ENCODE measurements at regions of chr6 and their contacts with region 1.

Region 1: DNA sequence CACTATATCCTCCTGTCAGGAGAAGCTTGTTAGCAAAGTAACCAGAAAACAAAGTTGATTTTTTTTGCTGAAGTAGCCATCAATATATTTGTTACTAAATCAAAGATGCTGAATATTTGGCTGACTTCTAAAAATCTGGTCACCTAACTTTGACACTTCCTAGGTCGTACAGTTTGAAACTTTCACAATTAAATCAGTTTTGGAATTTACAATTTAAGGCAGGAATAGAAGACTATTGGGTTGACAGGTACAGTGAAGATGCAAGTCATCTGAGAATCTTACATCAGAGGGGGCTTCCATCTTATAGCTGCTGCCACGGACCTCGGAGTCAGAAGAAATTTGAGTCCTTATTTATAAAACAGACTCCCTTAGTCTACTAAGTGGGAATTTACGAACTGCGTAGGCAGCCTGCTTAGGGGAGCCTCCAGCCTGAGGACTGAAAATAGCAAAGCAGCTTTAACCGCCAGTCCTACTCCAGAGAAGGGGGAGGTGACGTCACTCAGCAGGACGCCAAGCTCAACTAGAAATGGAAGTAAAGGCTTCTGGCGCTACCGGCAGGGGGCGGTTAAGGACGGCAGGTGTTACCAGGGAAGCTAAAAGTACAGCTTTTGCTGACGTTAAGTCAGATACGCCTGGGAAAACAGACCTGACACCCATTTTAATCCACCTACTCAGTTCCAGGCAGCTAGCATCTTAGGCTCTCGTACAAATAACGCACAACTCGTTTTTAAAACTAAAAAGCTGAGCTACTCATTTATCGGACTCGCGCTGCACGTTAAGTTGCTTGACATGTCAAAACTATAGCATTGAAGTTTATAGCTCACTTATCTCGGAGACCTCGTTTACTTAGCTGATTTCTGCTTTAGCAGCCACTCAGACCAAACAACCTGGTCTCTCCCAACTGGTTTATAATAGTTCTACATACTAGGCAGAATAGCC is 61.1 kb upstream of the HFE start:
- DNase-seq: peak; percentile 96
- ATAC-seq: peak; percentile 39
- H3K4me3 Mint-ChIP-seq: peak overlapping the region; percentile 81
- H3K27ac Mint-ChIP-seq: peak overlapping the region; percentile 98
- H3K4me1 Mint-ChIP-seq: peaks cover 51% of the 10 kb centered on the region
- H3K27me3 Mint-ChIP-seq: no peaks in the 10 kb centered on the region

Region 2: DNA sequence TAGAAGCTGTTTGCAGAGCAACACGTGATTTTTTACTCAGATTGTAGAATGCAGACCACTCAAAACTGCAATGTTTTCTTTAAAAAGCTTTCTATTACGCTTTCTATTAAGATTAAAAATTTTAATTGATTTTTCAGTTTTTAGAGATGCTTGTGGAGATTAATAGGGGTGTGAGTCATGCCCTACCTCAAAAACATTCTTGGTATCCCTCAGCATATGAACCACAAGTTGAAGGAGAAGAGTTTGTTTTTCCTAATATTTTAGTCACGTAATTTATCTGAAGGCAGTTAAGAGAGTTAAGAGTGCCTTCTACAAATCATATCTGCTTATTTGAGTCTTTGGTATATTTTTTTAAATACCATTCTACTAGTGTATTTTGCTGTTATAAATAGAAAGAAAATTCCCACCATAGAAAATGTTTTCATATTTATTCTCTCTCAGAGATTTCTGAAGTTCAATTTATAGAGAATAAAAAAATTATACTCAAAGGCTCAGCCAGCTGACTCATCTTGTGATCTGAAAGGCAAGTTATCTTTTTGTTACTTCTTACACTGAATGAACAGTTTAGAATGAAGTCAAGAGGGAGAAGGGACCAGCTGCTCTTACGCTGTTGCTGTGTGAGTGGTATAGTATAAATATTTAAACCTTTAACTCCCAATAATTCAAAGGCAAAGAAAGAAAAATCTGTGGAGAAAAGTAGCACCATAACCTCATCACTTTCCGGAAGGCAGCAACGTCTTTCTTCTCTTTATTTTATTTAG is 1098.0 kb before region 1 on chr6:
- CTCF ChIA-PET with region 1: no interaction called
- POLR2A ChIA-PET with region 1: interaction called, 4 read pairs
- intact Hi-C with region 1: loop called in 1 of 2 experiments (anchors 5 kb)
- DNase-seq: no peak
- ATAC-seq: peak; percentile 15
- H3K4me3 Mint-ChIP-seq: peak overlapping the region; percentile 84
- H3K27ac Mint-ChIP-seq: peak overlapping the region; percentile 95
- H3K4me1 Mint-ChIP-seq: peaks cover 90% of the 10 kb centered on the region
- H3K27me3 Mint-ChIP-seq: no peaks in the 10 kb centered on the region

Region 3: GRCh38 chr6:25617997-25618396 is 408.2 kb before region 1 on chr6:
- CTCF ChIA-PET with region 1: no interaction called
- POLR2A ChIA-PET with region 1: no interaction called
- intact Hi-C with region 1: no loop called
- DNase-seq: no peak
- ATAC-seq: no peak
- H3K4me3 Mint-ChIP-seq: no peak overlapping the region
- H3K27ac Mint-ChIP-seq: no peak overlapping the region
- H3K4me1 Mint-ChIP-seq: no peaks in the 10 kb centered on the region
- H3K27me3 Mint-ChIP-seq: no peaks in the 10 kb centered on the region

Region 4: GRCh38 chr6:25851961-25852360 is 174.2 kb before region 1 on chr6:
- CTCF ChIA-PET with region 1: no interaction called
- POLR2A ChIA-PET with region 1: no interaction called
- intact Hi-C with region 1: no loop called
- DNase-seq: no peak
- ATAC-seq: no peak
- H3K4me3 Mint-ChIP-seq: no peak overlapping the region
- H3K27ac Mint-ChIP-seq: no peak overlapping the region
- H3K4me1 Mint-ChIP-seq: peaks cover 7% of the 10 kb centered on the region
- H3K27me3 Mint-ChIP-seq: peaks cover 14% of the 10 kb centered on the region

Region 5: GRCh38 chr6:25934735-25935306 is 91.3 kb before region 1 on chr6:
- CTCF ChIA-PET with region 1: no interaction called
- POLR2A ChIA-PET with region 1: no interaction called
- intact Hi-C with region 1: no loop called
- DNase-seq: no peak
- ATAC-seq: peak; percentile 61
- H3K4me3 Mint-ChIP-seq: no peak overlapping the region
- H3K27ac Mint-ChIP-seq: no peak overlapping the region
- H3K4me1 Mint-ChIP-seq: peaks cover 8% of the 10 kb centered on the region
- H3K27me3 Mint-ChIP-seq: peaks cover 10% of the 10 kb centered on the region

Region 6: DNA sequence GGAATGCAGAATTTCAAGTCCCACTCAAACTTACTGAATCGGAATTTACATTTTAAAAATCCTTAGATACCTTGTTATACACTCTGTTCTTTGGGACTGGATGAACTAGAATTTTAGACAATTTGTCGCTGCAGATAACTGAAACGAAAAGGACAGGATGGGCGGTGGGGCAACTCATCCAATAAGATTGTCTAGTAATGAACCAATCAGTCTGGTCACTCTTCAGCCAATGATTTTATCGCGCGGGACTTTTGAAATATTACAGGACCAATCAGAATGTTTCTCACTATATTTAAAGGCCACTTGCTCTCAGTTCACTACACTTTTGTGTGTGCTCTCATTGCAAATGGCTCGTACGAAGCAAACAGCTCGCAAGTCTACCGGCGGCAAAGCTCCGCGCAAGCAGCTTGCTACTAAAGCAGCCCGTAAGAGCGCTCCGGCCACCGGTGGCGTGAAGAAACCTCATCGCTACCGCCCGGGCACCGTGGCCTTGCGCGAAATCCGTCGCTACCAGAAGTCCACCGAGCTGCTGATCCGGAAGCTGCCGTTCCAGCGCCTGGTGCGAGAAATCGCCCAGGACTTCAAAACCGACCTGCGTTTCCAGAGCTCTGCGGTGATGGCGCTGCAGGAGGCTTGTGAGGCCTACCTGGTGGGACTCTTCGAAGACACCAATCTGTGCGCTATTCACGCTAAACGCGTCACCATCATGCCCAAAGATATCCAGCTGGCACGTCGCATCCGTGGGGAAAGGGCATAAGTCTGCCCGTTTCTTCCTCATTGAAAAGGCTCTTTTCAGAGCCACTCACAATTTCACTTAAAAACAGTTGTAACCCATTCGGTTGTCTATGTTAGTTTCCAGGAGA is 19.1 kb after region 1 on chr6:
- CTCF ChIA-PET with region 1: interaction called, 49 read pairs
- POLR2A ChIA-PET with region 1: interaction called, 571 read pairs
- intact Hi-C with region 1: loop called (anchors 1 kb)
- DNase-seq: peak; percentile 83
- ATAC-seq: peak; percentile 63
- H3K4me3 Mint-ChIP-seq: peak overlapping the region; percentile 79
- H3K27ac Mint-ChIP-seq: peak overlapping the region; percentile 99
- H3K4me1 Mint-ChIP-seq: peaks cover 18% of the 10 kb centered on the region
- H3K27me3 Mint-ChIP-seq: no peaks in the 10 kb centered on the region

Region 7: GRCh38 chr6:26065952-26066380 is 39.8 kb after region 1 on chr6:
- CTCF ChIA-PET with region 1: interaction called, 10 read pairs
- POLR2A ChIA-PET with region 1: no interaction called
- intact Hi-C with region 1: no loop called
- DNase-seq: peak; percentile 72
- ATAC-seq: peak; percentile 95
- H3K4me3 Mint-ChIP-seq: no peak overlapping the region
- H3K27ac Mint-ChIP-seq: no peak overlapping the region
- H3K4me1 Mint-ChIP-seq: peaks cover 2% of the 10 kb centered on the region
- H3K27me3 Mint-ChIP-seq: no peaks in the 10 kb centered on the region

Region 8: DNA sequence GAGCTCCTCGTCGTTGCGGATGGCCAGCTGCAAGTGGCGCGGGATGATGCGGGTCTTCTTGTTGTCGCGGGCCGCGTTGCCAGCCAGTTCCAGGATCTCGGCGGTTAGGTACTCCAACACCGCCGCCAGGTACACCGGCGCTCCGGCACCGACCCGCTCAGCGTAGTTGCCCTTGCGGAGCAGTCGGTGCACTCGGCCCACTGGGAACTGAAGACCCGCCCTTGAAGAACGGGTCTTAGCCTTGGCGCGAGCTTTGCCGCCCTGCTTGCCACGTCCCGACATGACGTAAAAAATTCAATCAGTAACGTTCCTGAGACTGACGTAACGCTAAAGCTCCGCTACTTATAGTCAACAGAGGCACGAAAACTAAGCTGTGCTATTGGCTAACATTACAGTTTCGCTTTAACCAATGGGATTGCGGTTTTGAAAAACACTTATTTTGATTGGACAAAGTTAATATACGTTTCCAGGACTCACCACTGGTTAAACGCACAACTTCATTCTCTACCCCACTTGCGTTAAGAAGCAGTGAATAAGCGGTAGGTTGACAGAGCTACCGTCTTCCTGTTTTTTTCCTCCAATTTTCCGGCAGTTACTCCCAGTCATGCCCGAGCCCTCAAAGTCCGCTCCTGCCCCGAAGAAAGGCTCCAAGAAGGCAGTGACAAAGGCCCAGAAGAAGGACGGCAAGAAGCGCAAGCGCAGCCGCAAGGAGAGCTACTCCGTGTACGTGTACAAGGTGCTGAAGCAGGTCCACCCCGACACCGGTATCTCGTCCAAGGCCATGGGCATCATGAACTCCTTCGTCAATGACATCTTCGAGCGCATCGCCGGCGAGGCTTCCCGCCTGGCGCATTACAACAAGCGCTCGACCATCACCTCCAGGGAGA is 1812.1 kb after region 1 on chr6:
- CTCF ChIA-PET with region 1: no interaction called
- POLR2A ChIA-PET with region 1: interaction called, 3 read pairs
- intact Hi-C with region 1: loop called (anchors 10 kb)
- DNase-seq: peak; percentile 89
- ATAC-seq: peak; percentile 74
- H3K4me3 Mint-ChIP-seq: no peak overlapping the region
- H3K27ac Mint-ChIP-seq: no peak overlapping the region
- H3K4me1 Mint-ChIP-seq: peaks cover 23% of the 10 kb centered on the region
- H3K27me3 Mint-ChIP-seq: peaks cover 9% of the 10 kb centered on the region